GM10248 (cell line): ENCODE measurements at regions of chr16 and their contacts with region 1.

Region 1: GRCh38 chr16:30534368-30535105 is at the start of gene ZNF747:
- DNase-seq: peak; percentile 92
- CTCF ChIP-seq: peak; percentile 11

Region 2: GRCh38 chr16:30378236-30379204 is 156.0 kb before region 1 on chr16:
- CTCF ChIA-PET with region 1: no interaction called
- POLR2A ChIA-PET with region 1: no interaction called
- DNase-seq: peak; percentile 98
- CTCF ChIP-seq: no peak

Region 3: GRCh38 chr16:30445408-30446202 is 88.9 kb before region 1 on chr16 and contains the start of gene SEPHS2:
- CTCF ChIA-PET with region 1: interaction called, 29 read pairs
- POLR2A ChIA-PET with region 1: no interaction called
- DNase-seq: peak; percentile 94
- CTCF ChIP-seq: peak; percentile 59

Region 4: GRCh38 chr16:30557957-30558788 is 23.6 kb after region 1 on chr16 and contains the start of gene ZNF764:
- CTCF ChIA-PET with region 1: interaction called, 47 read pairs
- POLR2A ChIA-PET with region 1: interaction called, 7 read pairs
- DNase-seq: peak; percentile 93
- CTCF ChIP-seq: no peak

Region 5: GRCh38 chr16:30573430-30573969 is 39.0 kb after region 1 on chr16:
- CTCF ChIA-PET with region 1: interaction called, 12 read pairs
- POLR2A ChIA-PET with region 1: no interaction called
- DNase-seq: no peak
- CTCF ChIP-seq: no peak

Region 6: GRCh38 chr16:30615358-30616091 is 81.0 kb after region 1 on chr16:
- CTCF ChIA-PET with region 1: interaction called, 13 read pairs
- POLR2A ChIA-PET with region 1: no interaction called
- DNase-seq: peak; percentile 50
- CTCF ChIP-seq: peak; percentile 74

Region 7: GRCh38 chr16:30724641-30725417 is 190.3 kb after region 1 on chr16:
- CTCF ChIA-PET with region 1: no interaction called
- POLR2A ChIA-PET with region 1: no interaction called
- DNase-seq: no peak
- CTCF ChIP-seq: no peak